ENCODE measurements at regions of chr7 and their contacts with region 1.

Region 1: GRCh38 chr7:149090397-149091195 is at the start of gene ZNF786:
- DNase-seq: peak; percentile 87
- H3K4me3 ChIP-seq: peak within 1 kb of the TSS; percentile 76 to 96 (median 89)
- H3K27ac ChIP-seq: peak within 1 kb of the TSS; percentile 32
- H3K4me1 ChIP-seq: peaks cover 6% of the 10 kb centered on the region
- H3K27me3 ChIP-seq: no peaks in the 10 kb centered on the region
- CTCF ChIP-seq: peak; percentile 89 to 96
- POLR2A ChIP-seq: peak; percentile 71
- total RNA-seq, gene ZNF786: 5.4 and 5.9 TPM in 2 replicates

Region 2: GRCh38 chr7:148575640-148576411 is 514.8 kb before region 1 on chr7:
- CTCF ChIA-PET with region 1: no interaction called
- POLR2A ChIA-PET with region 1: no interaction called
- dilution Hi-C with region 1: no loop called
- intact Hi-C with region 1: loop called (anchors 10 kb)
- DNase-seq: peak; percentile 71
- H3K4me3 ChIP-seq: no peak overlapping the region
- H3K27ac ChIP-seq: no peak overlapping the region
- H3K4me1 ChIP-seq: no peaks in the 10 kb centered on the region
- H3K27me3 ChIP-seq: no peaks in the 10 kb centered on the region
- CTCF ChIP-seq: peak; percentile 81 to 82
- POLR2A ChIP-seq: no peak

Region 3: GRCh38 chr7:148987010-148987750 is 103.4 kb before region 1 on chr7:
- CTCF ChIA-PET with region 1: no interaction called
- POLR2A ChIA-PET with region 1: no interaction called
- dilution Hi-C with region 1: no loop called
- intact Hi-C with region 1: loop called (anchors 1 kb)
- DNase-seq: peak; percentile 94
- H3K4me3 ChIP-seq: peak overlapping the region; percentile 21 to 63 (median 56)
- H3K27ac ChIP-seq: peak overlapping the region; percentile 32
- H3K4me1 ChIP-seq: peaks cover 11% of the 10 kb centered on the region
- H3K27me3 ChIP-seq: peaks cover 0 to 10% of the 10 kb centered on the region in 2 experiments
- CTCF ChIP-seq: no peak
- POLR2A ChIP-seq: peak; percentile 63

Region 4: GRCh38 chr7:149028346-149029109 is 62.1 kb before region 1 on chr7 and contains the start of gene PDIA4:
- CTCF ChIA-PET with region 1: no interaction called
- POLR2A ChIA-PET with region 1: no interaction called
- dilution Hi-C with region 1: no loop called
- intact Hi-C with region 1: loop called (anchors 1 kb)
- DNase-seq: peak; percentile 100
- H3K4me3 ChIP-seq: peak within 1 kb of the TSS; percentile 80 to 91 (median 90)
- H3K27ac ChIP-seq: peak within 1 kb of the TSS; percentile 56
- H3K4me1 ChIP-seq: peaks cover 12% of the 10 kb centered on the region
- H3K27me3 ChIP-seq: no peaks in the 10 kb centered on the region
- CTCF ChIP-seq: peak in 1 of 2 donors; percentile 50
- POLR2A ChIP-seq: peak; percentile 73
- total RNA-seq, gene PDIA4: 306 and 308 TPM in 2 replicates

Region 5: DNA sequence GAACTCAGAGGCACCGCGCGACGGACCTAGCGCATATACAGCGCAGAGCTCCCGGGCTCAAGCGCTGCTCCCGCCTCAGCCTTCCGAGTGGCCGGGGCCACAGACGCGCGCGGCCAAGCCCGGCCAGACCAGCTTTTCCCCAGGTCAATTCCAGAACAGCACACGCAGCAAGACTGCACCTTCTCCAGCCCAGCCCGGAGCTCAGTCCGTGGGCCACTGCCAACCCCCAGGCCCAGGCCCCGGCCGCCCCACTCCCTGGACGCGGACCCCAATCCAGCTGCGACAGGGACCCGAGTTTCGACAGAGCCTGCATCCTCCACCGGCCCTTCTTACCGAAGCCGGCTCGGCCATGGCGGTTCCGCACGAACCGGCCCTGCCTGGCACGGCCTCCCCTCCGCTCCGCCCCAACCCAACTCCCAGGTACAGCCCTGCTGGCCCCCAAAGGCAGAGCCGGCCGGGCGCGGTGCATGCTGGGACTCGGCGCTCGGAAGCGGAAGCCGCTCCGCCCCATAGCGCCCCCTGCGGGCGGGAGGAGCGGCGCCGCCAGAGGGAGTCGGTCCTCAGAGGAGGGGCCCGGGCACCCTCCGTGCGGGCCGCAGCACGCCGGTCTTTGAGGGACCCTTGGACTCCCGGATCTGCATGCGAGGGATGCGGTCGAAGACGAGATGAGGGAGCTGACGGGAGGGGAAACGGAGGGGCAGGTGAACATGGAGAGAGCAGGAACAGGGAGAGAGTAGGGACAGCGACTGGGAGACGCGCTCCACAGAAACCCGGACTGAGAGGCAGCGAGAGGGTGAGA is 35.5 kb after region 1 on chr7 and contains the start of gene ZNF425:
- CTCF ChIA-PET with region 1: interaction called, 4 read pairs
- POLR2A ChIA-PET with region 1: no interaction called
- dilution Hi-C with region 1: no loop called
- intact Hi-C with region 1: loop called (anchors 1 kb)
- DNase-seq: peak; percentile 93
- H3K4me3 ChIP-seq: peak within 1 kb of the TSS; percentile 56 to 96 (median 86)
- H3K27ac ChIP-seq: peak within 1 kb of the TSS; percentile 39
- H3K4me1 ChIP-seq: peaks cover 13% of the 10 kb centered on the region
- H3K27me3 ChIP-seq: no peaks in the 10 kb centered on the region
- CTCF ChIP-seq: peak; percentile 94 to 97
- POLR2A ChIP-seq: peak; percentile 81
- total RNA-seq, gene ZNF425: 0.93 and 2.0 TPM in 2 replicates

Region 6: GRCh38 chr7:149620961-149621360 is 530.4 kb after region 1 on chr7:
- CTCF ChIA-PET with region 1: no interaction called
- POLR2A ChIA-PET with region 1: no interaction called
- dilution Hi-C with region 1: no loop called
- intact Hi-C with region 1: no loop called
- DNase-seq: no peak
- H3K4me3 ChIP-seq: no peak overlapping the region
- H3K27ac ChIP-seq: no peak overlapping the region
- H3K4me1 ChIP-seq: peaks cover 10% of the 10 kb centered on the region
- H3K27me3 ChIP-seq: no peaks in the 10 kb centered on the region
- CTCF ChIP-seq: no peak
- POLR2A ChIP-seq: no peak